Right cardiac atrium (tissue), 5 donors: ENCODE measurements at regions of chr20 and their contacts with region 1.

Region 1: GRCh38 chr20:39676857-39677391 is 714.8 kb downstream of the DHX35 start:
- DNase-seq: no peak
- ATAC-seq: no peak
- H3K4me3 ChIP-seq: no peak overlapping the region
- H3K27ac ChIP-seq: no peak overlapping the region
- H3K4me1 ChIP-seq: peaks cover 2% of the 10 kb centered on the region
- H3K27me3 ChIP-seq: no peaks in the 10 kb centered on the region

Region 2: DNA sequence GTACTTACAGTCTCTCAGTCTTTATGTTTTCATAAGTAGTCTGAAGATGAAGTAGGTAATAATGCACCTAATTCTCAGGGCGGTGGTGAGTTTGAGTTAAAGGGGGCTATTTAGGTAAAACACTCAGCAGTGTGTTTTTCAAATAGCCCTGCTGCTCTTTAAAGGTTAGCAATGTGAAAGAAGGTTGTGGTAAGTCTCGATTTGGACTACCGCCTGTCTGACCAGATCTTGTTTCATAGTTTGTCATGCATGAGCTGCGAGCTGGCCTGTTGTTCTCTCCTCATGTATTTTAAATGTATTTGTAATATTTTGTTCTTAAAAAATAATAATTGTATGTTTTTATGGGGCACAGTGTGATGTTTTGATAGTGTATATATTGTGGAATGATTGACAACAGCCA is 374.6 kb before region 1 on chr20:
- intact Hi-C with region 1: loop called in 1 of 4 experiments (anchors 10 kb)
- DNase-seq: no peak
- ATAC-seq: no peak
- H3K4me3 ChIP-seq: no peak overlapping the region
- H3K27ac ChIP-seq: no peak overlapping the region
- H3K4me1 ChIP-seq: no peaks in the 10 kb centered on the region
- H3K27me3 ChIP-seq: no peaks in the 10 kb centered on the region

Region 3: DNA sequence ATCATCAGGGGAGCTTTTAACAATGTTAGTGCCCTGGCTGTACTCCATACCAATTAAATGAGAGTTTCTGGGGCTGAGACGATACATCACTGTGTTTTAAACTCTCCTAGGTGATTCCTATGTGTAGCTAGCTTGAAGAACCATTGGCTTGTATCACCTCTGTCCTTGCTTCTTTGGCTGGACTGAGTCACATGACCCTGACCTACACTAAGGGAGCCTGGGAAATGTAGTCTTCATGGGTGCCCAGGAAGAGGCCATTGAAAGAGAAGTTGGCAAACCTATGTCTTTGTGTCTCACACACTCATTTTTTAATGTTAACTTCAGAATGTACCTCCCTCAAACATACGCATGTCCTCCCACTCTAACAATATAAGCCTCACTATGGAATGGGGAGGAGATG is 208.2 kb before region 1 on chr20:
- intact Hi-C with region 1: no loop called
- DNase-seq: no peak
- ATAC-seq: no peak
- H3K4me3 ChIP-seq: no peak overlapping the region
- H3K27ac ChIP-seq: no peak overlapping the region
- H3K4me1 ChIP-seq: no peaks in the 10 kb centered on the region
- H3K27me3 ChIP-seq: no peaks in the 10 kb centered on the region